Endothelial cell of umbilical vein (primary cell): ENCODE measurements at regions of chr10 and their contacts with region 1.

Region 1: DNA sequence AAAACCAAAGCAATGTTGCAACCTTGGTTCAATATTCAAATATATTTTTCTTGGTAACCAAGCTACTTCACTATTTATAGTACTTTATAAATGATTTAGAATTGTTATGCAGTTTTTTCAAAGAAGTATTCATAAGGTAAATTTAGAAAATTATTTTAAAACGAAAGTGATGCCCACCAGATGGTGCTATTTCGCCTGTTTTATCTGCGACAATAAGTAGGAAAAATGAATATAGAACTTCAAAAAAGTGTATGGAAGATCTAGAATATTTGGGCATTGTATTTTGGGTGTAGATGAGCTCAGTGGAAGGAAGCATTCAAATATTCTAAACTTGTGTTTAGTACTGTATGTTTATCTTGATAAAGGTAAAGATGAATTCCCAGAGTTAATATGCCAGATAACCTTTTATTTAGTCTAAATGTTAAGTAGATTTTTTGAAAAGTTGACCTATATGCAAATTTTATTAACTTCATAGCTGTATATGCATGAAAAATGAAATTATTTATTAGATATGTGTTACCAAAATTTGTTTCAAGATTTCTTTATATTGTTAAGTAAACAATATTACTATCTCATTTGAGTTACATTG is 93.2 kb downstream of the ADK start:
- DNase-seq: peak; percentile 75
- H3K4me3 ChIP-seq: no peak overlapping the region
- H3K27ac ChIP-seq: no peak overlapping the region
- H3K4me1 ChIP-seq: peaks cover 3% of the 10 kb centered on the region
- H3K27me3 ChIP-seq: no peaks in the 10 kb centered on the region
- CTCF ChIP-seq: peak; percentile 7 to 26
- POLR2A ChIP-seq: no peak

Region 2: GRCh38 chr10:74255888-74256357 is 11.7 kb after region 1 on chr10:
- CTCF ChIA-PET with region 1: interaction called, 12 read pairs
- POLR2A ChIA-PET with region 1: no interaction called
- dilution Hi-C with region 1: no loop called
- intact Hi-C with region 1: no loop called
- DNase-seq: no peak
- H3K4me3 ChIP-seq: no peak overlapping the region
- H3K27ac ChIP-seq: no peak overlapping the region
- H3K4me1 ChIP-seq: peaks cover 2% of the 10 kb centered on the region
- H3K27me3 ChIP-seq: no peaks in the 10 kb centered on the region
- CTCF ChIP-seq: no peak
- POLR2A ChIP-seq: no peak

Region 3: DNA sequence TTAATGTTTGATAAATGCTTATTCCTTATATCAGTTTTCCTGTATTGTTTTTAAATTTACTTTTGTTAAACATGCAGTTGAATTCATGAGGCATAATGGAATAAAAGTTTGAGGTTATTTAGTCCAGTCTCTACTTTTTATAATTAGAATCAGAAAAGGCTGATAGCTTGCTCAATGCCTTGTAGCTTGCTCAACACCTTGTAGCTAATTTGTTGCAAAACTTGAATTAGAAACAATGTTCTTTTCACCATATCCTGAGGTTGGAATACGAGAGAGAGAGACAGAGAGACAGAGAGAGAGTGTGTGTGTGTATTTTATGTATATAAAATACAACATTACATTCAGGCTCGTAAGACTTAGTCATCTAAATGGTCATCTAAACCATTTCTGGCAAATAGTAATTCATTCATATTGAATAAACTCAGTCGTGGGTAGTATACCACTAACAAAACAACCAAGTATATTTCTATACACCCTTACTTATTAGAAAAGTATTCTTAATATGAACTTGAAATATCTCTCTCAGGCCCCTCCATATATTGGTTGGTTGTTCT is 150.3 kb after region 1 on chr10:
- CTCF ChIA-PET with region 1: no interaction called
- POLR2A ChIA-PET with region 1: no interaction called
- dilution Hi-C with region 1: no loop called
- intact Hi-C with region 1: no loop called
- DNase-seq: no peak
- H3K4me3 ChIP-seq: no peak overlapping the region
- H3K27ac ChIP-seq: no peak overlapping the region
- H3K4me1 ChIP-seq: peaks cover 10% of the 10 kb centered on the region
- H3K27me3 ChIP-seq: no peaks in the 10 kb centered on the region
- CTCF ChIP-seq: no peak
- POLR2A ChIP-seq: no peak